ENCODE measurements at regions of chr16 and their contacts with region 1.

Region 1: GRCh38 chr16:48623304-48624016 is 13.5 kb upstream of the N4BP1 start:
- DNase-seq: peak; percentile 85
- H3K4me3 Mint-ChIP-seq: peak overlapping the region; percentile 71
- H3K27ac Mint-ChIP-seq: no peak overlapping the region
- H3K4me1 Mint-ChIP-seq: peaks cover 36% of the 10 kb centered on the region
- H3K27me3 Mint-ChIP-seq: peaks cover 10% of the 10 kb centered on the region

Region 2: DNA sequence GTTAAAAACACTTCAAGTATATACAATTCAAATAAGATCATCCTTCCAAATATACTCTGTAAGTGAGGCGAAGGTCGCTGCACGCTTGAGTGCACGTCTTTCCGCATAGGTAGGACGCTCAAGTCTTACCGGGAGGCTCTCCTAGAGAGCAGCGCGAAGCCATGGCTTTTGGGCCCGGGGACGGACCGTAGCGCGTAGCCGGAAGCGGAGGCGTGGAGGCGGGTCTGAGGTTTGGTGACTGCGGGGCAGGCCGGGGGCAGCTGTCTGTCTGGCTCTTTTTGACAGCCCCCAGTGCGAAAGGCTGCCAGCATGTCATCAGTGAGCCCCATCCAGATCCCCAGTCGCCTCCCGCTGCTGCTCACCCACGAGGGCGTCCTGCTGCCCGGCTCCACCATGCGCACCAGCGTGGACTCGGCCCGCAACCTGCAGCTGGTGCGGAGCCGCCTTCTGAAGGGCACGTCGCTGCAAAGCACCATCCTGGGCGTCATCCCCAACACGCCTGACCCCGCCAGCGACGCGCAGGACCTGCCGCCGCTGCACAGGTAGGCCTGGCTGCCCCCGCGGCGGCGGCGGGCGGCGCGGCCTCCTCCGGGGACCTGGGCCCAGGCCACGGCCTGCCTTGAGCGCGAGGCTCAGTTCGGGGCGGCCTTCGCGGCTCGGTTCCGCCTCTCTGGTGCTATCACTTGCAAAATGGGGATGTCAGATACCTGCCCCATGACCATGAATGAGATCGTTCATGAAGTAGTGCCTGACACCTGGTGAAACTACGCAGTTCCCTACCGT is 379.2 kb before region 1 on chr16 and contains the start of gene LONP2:
- CTCF ChIA-PET with region 1: interaction called, 13 read pairs
- POLR2A ChIA-PET with region 1: interaction called, 5 read pairs
- DNase-seq: peak; percentile 93
- H3K4me3 Mint-ChIP-seq: peak within 1 kb of the TSS; percentile 87
- H3K27ac Mint-ChIP-seq: peak within 1 kb of the TSS; percentile 81
- H3K4me1 Mint-ChIP-seq: peaks cover 32% of the 10 kb centered on the region
- H3K27me3 Mint-ChIP-seq: no peaks in the 10 kb centered on the region
- total RNA-seq, gene LONP2: 50.4 to 52.1 TPM

Region 3: GRCh38 chr16:48365581-48366164 is 257.8 kb before region 1 on chr16:
- CTCF ChIA-PET with region 1: interaction called, 116 read pairs
- POLR2A ChIA-PET with region 1: interaction called, 9 read pairs
- DNase-seq: peak; percentile 89
- H3K4me3 Mint-ChIP-seq: peak overlapping the region; percentile 90
- H3K27ac Mint-ChIP-seq: peak overlapping the region; percentile 99
- H3K4me1 Mint-ChIP-seq: peaks cover 56% of the 10 kb centered on the region
- H3K27me3 Mint-ChIP-seq: no peaks in the 10 kb centered on the region

Region 4: DNA sequence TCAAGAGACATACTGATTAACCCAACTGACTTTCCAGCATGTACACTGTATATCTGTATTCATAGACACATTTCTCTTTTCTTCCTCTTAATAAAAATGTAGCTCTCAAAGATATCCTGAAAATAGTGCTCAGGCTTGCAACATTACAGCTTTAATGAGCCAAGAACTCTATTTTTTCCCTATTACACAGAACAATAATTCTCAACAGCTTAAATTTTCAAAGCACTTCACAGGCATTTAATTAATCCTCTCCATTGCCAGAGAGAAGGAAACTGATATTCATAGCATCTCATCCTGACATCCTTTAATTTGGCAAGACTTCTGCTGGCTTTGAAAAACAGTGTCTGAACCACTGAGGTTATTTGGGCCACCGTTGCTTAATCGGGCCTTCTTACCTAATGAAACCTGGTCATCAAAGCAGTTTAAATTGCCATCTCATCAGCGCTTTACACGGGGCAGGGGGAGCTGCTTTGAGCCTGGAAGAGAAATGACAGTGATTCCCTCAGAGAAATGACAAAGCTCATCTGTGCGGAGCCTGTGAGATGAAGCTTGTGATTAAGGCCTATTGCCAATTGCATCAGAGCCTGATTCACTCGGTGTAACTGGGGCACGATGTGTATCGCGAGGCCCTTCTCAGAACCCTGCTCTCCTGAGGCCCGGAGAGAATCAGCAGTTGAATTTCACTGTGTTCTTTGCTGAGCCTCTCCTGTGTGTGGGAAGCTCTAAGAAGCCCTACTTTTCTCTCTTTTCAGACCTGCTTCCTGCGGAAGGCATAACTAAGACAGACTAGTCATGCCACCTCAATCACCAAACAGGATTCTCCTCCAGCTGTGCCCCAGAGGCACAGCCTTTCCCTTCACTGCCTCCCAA is 229.7 kb before region 1 on chr16:
- CTCF ChIA-PET with region 1: no interaction called
- POLR2A ChIA-PET with region 1: no interaction called
- DNase-seq: no peak
- H3K4me3 Mint-ChIP-seq: no peak overlapping the region
- H3K27ac Mint-ChIP-seq: peak overlapping the region; percentile 63
- H3K4me1 Mint-ChIP-seq: peaks cover 13% of the 10 kb centered on the region
- H3K27me3 Mint-ChIP-seq: no peaks in the 10 kb centered on the region

Region 5: DNA sequence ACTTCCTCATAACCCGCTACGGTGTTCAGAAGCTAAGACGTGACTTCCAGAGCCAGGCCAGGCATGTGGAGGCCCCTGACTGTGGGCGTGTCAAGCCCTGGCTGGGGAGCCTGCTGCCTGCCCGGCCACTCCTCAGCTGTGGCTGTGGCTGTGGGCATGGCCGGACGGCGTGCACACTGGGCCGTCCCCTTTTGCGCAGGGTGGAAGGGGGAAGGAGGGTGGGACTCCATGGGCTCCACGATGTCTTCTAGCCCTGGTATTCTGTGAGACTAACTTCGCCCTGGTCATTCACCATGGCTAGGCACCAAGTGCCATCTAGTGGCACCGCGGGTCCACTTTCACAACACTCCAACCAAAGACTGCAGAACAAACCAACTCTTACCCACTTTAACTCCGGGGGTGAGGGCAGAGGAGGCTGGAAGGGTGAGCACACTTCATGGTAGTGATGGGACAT is 81.4 kb before region 1 on chr16:
- CTCF ChIA-PET with region 1: interaction called, 18 read pairs
- POLR2A ChIA-PET with region 1: interaction called, 5 read pairs
- DNase-seq: no peak
- H3K4me3 Mint-ChIP-seq: no peak overlapping the region
- H3K27ac Mint-ChIP-seq: peak overlapping the region; percentile 21
- H3K4me1 Mint-ChIP-seq: peaks cover 13% of the 10 kb centered on the region
- H3K27me3 Mint-ChIP-seq: no peaks in the 10 kb centered on the region

Region 6: DNA sequence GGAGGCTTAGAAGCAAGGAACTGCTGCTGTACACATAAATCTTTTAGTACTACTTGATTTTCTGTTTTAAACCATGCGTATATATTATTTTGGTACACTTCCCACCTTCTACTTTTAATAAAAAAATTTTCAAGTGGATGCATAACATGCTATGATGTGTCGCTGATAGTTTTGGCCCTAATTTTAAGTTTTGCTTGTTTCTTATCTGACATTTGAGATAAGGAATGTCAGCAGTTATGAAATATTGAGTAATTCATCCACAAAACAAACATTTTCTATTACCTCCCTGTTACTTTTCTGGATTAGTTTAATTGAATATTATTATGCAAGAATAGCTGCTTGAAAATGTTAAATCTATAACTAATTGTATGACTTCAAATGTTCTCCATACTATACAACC is 49.3 kb before region 1 on chr16:
- CTCF ChIA-PET with region 1: interaction called, 11 read pairs
- POLR2A ChIA-PET with region 1: no interaction called
- DNase-seq: no peak
- H3K4me3 Mint-ChIP-seq: no peak overlapping the region
- H3K27ac Mint-ChIP-seq: no peak overlapping the region
- H3K4me1 Mint-ChIP-seq: peaks cover 54% of the 10 kb centered on the region
- H3K27me3 Mint-ChIP-seq: no peaks in the 10 kb centered on the region

Region 7: DNA sequence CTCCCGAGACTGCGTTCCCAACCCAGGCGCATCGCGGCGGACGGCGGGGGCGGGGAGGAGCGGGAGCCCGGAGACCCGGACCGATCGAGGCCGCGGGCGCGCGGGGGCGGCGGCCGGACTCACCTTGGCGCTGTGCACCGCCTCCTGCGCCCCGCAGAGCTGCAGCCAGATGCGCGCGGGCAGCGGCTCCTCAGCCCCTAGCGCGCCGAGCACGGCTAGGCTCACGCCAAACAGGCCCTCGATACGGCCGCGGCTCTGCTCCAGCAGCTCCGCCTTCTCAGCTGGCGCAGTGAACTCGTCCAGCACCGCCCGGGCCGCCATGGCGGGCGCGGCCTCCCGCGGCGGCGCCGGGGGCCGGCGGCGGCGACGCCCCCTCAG is 13.8 kb before region 1 on chr16:
- CTCF ChIA-PET with region 1: interaction called, 143 read pairs
- POLR2A ChIA-PET with region 1: interaction called, 42 read pairs
- DNase-seq: no peak
- H3K4me3 Mint-ChIP-seq: no peak overlapping the region
- H3K27ac Mint-ChIP-seq: peak overlapping the region; percentile 53
- H3K4me1 Mint-ChIP-seq: peaks cover 44% of the 10 kb centered on the region
- H3K27me3 Mint-ChIP-seq: no peaks in the 10 kb centered on the region